PC-9 (cell line): ENCODE measurements at regions of chr1 and their contacts with region 1.

Region 1: GRCh38 chr1:52662645-52663313 is 29.8 kb downstream of the SHISAL2A start:
- DNase-seq: peak; percentile 66 to 98
- H3K4me3 ChIP-seq: peak overlapping the region; percentile 39; the same call in 1 of the 2 replicates
- H3K27ac ChIP-seq: peak overlapping the region; percentile 26; the same call in 1 of the 2 replicates
- H3K4me1 ChIP-seq: peaks cover 37% of the 10 kb centered on the region
- H3K27me3 ChIP-seq: no peaks in the 10 kb centered on the region
- CTCF ChIP-seq: no peak; the same call in 1 of the 2 replicates

Region 2: GRCh38 chr1:52359676-52360594 is 302.8 kb before region 1 on chr1:
- CTCF ChIA-PET with region 1: no interaction called
- POLR2A ChIA-PET with region 1: no interaction called
- intact Hi-C with region 1: no loop called
- DNase-seq: no peak
- H3K4me3 ChIP-seq: no peak overlapping the region
- H3K27ac ChIP-seq: no peak overlapping the region
- H3K4me1 ChIP-seq: peaks cover 6% of the 10 kb centered on the region
- H3K27me3 ChIP-seq: no peaks in the 10 kb centered on the region
- CTCF ChIP-seq: no peak

Region 3: GRCh38 chr1:52544665-52545525 is 117.9 kb before region 1 on chr1:
- CTCF ChIA-PET with region 1: interaction called, 11 read pairs
- POLR2A ChIA-PET with region 1: no interaction called
- intact Hi-C with region 1: no loop called
- DNase-seq: no peak
- H3K4me3 ChIP-seq: no peak overlapping the region
- H3K27ac ChIP-seq: no peak overlapping the region
- H3K4me1 ChIP-seq: 0 out of 2 replicates have a peak, but pooled peaks cover 4% of the 10 kb centered on the region
- H3K27me3 ChIP-seq: no peaks in the 10 kb centered on the region
- CTCF ChIP-seq: no peak

Region 4: DNA sequence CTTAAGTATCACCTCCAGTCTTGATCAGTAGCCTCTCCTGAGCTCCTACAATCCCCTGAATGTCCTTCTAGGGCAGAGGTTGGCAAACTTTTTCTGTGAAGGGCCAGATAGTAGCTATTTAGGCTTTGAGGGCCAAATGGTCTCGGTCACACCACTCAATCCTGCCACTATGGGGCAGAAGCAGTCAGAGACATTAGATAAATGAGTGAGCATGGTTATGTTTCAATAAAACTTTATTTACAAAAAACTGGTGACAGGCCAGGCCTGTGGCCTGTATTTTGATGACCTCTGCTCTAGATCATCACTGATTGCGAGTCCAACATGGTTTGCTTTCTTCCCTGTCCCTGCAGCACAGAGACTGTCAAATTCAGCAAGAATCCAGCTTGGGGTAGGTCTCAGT is 628.8 kb after region 1 on chr1:
- CTCF ChIA-PET with region 1: no interaction called
- POLR2A ChIA-PET with region 1: no interaction called
- intact Hi-C with region 1: no loop called
- DNase-seq: no peak
- H3K4me3 ChIP-seq: no peak overlapping the region
- H3K27ac ChIP-seq: no peak overlapping the region
- H3K4me1 ChIP-seq: peaks cover 17% of the 10 kb centered on the region
- H3K27me3 ChIP-seq: no peaks in the 10 kb centered on the region
- CTCF ChIP-seq: no peak